CD4-positive, alpha-beta T cell (primary cell): ENCODE measurements at regions of chr2 and their contacts with region 1.

Region 1: DNA sequence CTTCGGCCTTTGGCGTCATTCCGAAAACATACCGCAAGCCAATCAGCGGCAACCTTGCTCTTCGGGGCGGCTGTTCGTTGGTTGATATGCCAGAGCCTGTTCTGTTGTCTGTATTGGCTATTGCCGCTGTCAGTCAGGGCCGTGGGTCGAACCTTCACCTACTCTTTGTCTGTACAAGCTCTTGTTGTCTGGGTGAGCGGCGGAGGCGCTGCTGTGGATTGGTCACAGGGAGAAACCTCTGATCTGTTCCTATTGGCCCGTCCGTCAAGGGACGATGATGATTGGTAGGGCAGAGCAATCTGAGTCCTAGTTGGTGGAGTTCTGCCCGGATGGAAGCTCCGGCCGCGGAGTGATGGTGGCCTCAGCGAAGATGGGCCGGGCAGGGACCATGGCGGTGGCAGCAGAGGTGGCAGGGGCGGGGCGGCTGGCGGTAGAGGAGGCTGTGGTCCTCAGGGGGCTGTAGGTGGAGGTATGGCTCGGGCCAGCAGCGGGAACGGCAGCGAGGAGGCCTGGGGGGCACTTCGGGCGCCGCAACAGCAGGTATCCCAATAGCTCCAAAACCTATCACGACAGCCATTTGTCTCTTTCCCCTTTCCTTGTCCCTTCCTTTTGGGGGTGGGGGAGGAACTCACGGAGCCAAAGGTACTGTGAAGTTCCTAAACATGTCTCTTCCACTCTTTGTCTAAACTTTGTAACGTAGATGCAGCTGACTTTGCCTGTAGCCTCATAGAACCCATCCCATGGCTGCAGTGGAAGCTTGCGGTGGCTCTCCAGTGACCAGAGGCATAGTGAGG is at the start of gene WBP1:
- DNase-seq: peak; percentile 96 to 100 (median 98)
- ATAC-seq: peak; percentile 80
- H3K4me3 ChIP-seq: peak within 1 kb of the TSS; percentile 96
- H3K4me3 Mint-ChIP-seq: peak within 1 kb of the TSS; percentile 95
- H3K27ac ChIP-seq: peak within 1 kb of the TSS; percentile 100
- H3K27ac Mint-ChIP-seq: peak within 1 kb of the TSS; percentile 98
- H3K4me1 ChIP-seq: peaks cover 44% of the 10 kb centered on the region
- H3K4me1 Mint-ChIP-seq: peaks cover 64% of the 10 kb centered on the region
- H3K27me3 ChIP-seq: no peaks in the 10 kb centered on the region
- H3K27me3 Mint-ChIP-seq: no peaks in the 10 kb centered on the region
- CTCF ChIP-seq: no peak
- total RNA-seq, gene WBP1: 79.1 to 80.5 TPM

Region 2: GRCh38 chr2:74178201-74179062 is 279.9 kb before region 1 on chr2 and contains the start of gene MOB1A:
- CTCF ChIA-PET with region 1: no interaction called
- POLR2A ChIA-PET with region 1: interaction called, 10 read pairs
- intact Hi-C with region 1: no loop called
- DNase-seq: peak; percentile 93 to 99 (median 97)
- ATAC-seq: peak; percentile 95
- H3K4me3 ChIP-seq: peak within 1 kb of the TSS; percentile 62
- H3K4me3 Mint-ChIP-seq: peak within 1 kb of the TSS; percentile 95
- H3K27ac ChIP-seq: peak within 1 kb of the TSS; percentile 89 to 96
- H3K27ac Mint-ChIP-seq: peak within 1 kb of the TSS; percentile 91
- H3K4me1 ChIP-seq: peaks cover 35% of the 10 kb centered on the region
- H3K4me1 Mint-ChIP-seq: peaks cover 39% of the 10 kb centered on the region
- H3K27me3 ChIP-seq: no peaks in the 10 kb centered on the region
- H3K27me3 Mint-ChIP-seq: no peaks in the 10 kb centered on the region
- CTCF ChIP-seq: no peak
- total RNA-seq, gene MOB1A: 150 to 159 TPM

Region 3: DNA sequence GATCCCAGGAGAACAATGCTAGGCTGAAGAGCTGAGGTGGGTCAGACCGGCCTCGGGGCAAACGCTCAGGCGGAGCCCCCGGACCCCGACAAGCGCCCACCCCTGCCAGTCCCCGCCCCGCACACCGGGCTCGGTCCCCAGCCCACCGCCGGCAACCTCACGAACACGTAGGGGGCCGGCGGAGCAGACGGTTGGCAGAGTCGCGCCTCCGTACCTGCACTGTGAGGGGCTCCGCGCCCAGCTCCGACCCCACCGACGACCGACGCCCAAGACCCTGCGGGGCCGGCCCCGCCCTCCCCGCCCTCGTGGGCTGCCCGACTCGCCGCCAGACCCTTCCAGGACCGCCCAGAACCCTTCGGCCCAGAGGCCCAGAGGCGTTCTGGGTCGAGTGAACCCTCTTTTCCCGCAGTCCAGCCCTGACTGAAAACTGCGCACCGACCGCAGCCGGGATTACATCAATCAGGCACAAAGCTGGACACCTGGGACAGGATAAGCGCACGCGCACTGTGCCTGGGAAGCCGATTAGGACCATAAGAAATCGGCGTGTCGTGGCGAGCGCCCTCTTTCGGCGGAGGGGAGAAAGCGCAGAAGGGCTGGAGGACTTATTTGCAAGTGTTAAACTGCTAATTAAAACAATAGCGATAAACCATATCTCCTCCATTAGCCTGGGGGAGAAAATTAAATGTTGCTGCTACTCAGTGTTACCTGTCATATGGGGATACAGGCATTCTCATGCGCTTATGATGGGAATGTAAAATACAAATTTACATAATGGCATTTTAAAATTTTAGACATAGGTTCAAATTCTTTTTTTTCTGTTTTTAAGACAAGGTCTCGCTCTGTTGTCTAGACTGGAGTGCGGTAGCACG is 66.5 kb before region 1 on chr2:
- CTCF ChIA-PET with region 1: interaction called, 7 read pairs
- POLR2A ChIA-PET with region 1: interaction called, 17 read pairs
- intact Hi-C with region 1: no loop called
- DNase-seq: peak; percentile 92 to 98 (median 96)
- ATAC-seq: peak; percentile 90
- H3K4me3 ChIP-seq: peak overlapping the region; percentile 72
- H3K4me3 Mint-ChIP-seq: peak overlapping the region; percentile 99
- H3K27ac ChIP-seq: peak overlapping the region; percentile 88 to 92
- H3K27ac Mint-ChIP-seq: no peak overlapping the region
- H3K4me1 ChIP-seq: peaks cover 34% of the 10 kb centered on the region
- H3K4me1 Mint-ChIP-seq: peaks cover 9% of the 10 kb centered on the region
- H3K27me3 ChIP-seq: peaks cover 0 to 5% of the 10 kb centered on the region in 2 experiments
- H3K27me3 Mint-ChIP-seq: no peaks in the 10 kb centered on the region
- CTCF ChIP-seq: peak; percentile 99

Region 4: DNA sequence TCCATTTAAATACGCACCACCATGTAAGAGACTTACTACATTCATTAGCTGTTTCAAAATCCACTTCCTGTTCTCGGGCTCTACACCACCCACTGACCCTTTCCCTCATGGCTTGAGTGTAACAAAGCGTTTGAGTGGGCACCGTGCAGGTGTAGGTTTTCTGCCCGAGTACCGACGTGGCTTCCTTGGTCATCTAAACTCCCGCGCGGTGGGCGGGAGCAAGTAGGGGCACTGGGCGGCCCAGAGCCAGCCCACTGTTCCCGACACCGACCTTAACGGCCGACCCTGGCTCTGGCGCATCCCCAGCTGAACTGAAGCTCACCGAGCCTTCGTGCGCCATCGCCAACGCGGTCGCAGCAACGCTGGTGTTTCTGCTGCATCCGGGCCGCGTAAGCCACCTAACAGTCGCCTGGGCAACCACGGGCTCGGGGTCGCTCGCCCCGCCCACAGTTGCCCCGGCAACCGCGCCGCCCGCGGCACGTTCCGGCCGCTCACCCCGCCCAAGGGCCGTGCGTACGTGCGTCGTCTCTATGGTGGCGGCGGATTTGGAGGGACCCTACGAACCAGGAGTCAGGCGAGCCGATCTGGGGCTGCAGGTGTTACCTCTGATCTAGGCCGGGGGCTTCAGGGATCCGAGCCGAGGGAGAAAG is 37.0 kb before region 1 on chr2 and contains the starts of genes C2orf81 and WDR54:
- CTCF ChIA-PET with region 1: interaction called, 6 read pairs
- POLR2A ChIA-PET with region 1: interaction called, 25 read pairs
- intact Hi-C with region 1: loop called (anchors 1 to 2 kb)
- DNase-seq: peak; percentile 85 to 97 (median 94)
- ATAC-seq: peak; percentile 82
- H3K4me3 ChIP-seq: peak within 1 kb of the TSS; percentile 98
- H3K4me3 Mint-ChIP-seq: peak within 1 kb of the TSS; percentile 100
- H3K27ac ChIP-seq: peak within 1 kb of the TSS; percentile 82 to 98
- H3K27ac Mint-ChIP-seq: peak within 1 kb of the TSS; percentile 96
- H3K4me1 ChIP-seq: peaks cover 20% of the 10 kb centered on the region
- H3K4me1 Mint-ChIP-seq: peaks cover 39% of the 10 kb centered on the region
- H3K27me3 ChIP-seq: no peaks in the 10 kb centered on the region
- H3K27me3 Mint-ChIP-seq: no peaks in the 10 kb centered on the region
- CTCF ChIP-seq: no peak
- total RNA-seq, gene C2orf81: 2.9 to 3.4 TPM
- total RNA-seq, gene WDR54: 21.7 to 25.1 TPM

Region 5: DNA sequence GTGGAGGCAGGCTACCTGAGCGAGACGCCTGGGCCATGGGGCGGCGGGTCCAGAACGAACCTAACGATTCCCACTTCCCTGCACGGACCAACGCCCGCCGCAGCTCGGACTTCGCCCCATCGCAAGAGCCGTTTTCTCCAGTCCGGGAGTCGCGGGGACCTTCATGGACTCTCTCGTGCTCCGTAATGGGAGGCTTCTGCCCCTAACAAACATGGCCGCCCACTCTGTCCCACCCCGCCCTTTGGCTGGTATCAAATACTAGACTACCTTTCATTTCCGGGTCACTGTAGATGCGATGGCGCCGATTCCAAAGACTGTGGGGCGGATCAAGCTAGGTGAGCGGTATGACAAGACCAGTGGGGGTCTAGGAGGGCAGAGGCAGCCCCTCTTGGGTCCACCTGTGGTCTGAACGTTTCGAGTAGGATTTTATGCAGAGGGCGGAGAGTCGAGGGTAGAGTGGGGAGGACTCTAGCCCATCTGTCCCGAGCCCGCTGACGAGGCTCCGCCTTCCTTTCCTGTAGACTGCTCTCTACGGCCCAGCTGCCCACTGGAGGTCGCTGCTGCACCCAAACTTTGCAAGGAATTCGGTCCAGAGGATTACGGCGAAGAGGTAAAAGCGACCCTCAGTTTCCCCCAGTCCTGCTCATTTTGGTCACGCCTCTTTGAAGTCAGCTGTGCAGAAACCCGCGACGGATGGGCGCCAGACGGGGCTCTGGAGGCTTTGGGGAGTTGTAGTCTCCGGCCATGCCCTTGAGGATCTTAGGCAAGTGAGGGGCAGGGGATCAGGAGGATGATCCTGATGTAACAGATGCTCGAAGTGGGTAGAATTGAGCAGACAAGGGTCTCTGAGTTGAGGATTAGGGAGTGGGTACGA is 24.7 kb after region 1 on chr2 and contains the starts of genes CCDC142 and TTC31:
- CTCF ChIA-PET with region 1: interaction called, 61 read pairs
- POLR2A ChIA-PET with region 1: interaction called, 169 read pairs
- intact Hi-C with region 1: loop called (anchors 1 kb)
- DNase-seq: peak; percentile 87 to 96 (median 91)
- ATAC-seq: peak; percentile 94
- H3K4me3 ChIP-seq: peak within 1 kb of the TSS; percentile 77
- H3K4me3 Mint-ChIP-seq: peak within 1 kb of the TSS; percentile 99
- H3K27ac ChIP-seq: peak within 1 kb of the TSS; percentile 93 to 94
- H3K27ac Mint-ChIP-seq: peak within 1 kb of the TSS; percentile 97
- H3K4me1 ChIP-seq: peaks cover 31% of the 10 kb centered on the region
- H3K4me1 Mint-ChIP-seq: peaks cover 26% of the 10 kb centered on the region
- H3K27me3 ChIP-seq: no peaks in the 10 kb centered on the region
- H3K27me3 Mint-ChIP-seq: no peaks in the 10 kb centered on the region
- CTCF ChIP-seq: peak; percentile 85
- total RNA-seq, gene CCDC142: 10.2 to 12.4 TPM
- total RNA-seq, gene TTC31: 20.6 to 26.1 TPM